Posterior cingulate gyrus (tissue), 11 donors: ENCODE measurements at regions of chr2 and their contacts with region 1.

Region 1: DNA sequence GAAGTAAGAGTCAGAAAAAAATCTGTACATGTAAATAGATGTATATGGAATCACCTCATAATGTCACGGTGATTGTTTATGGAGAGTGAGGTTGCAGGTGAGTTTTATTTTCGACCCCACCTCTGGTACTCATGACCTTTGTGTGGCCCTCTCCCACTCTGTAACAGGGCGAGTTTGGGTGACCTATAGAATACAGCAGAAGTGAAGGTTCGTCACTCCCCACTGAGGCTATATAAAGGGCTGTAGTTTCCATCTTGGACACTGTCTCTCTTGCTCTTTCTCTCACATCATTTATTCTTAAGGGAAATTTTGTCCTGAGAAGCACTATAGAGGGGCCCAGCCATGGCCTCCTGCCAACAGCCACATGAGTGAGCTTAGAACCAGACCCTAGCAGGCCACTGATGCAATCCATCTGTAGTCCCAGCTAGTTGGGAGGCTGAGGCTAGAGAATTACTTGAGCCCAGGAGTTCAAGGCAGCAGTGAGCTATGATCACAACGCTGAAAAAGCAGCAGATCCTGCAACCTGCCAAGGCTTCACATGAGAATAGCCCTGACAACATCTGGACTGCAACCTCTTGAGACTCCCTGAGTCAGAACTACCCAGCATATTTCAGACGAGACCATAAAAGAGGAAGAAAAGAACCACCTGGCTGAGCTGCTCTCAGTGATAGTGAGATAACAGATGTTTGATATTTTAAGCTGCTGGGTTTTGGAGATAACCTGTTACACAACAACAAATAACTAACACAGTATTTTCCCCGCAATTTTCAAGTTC is 74.3 kb upstream of the SLC1A4 start:
- DNase-seq: no peak

Region 2: GRCh38 chr2:65031341-65032018 is 116.6 kb after region 1 on chr2:
- intact Hi-C with region 1: loop called (anchors 2 kb)
- DNase-seq: no peak

Region 3: GRCh38 chr2:65040400-65041261 is 125.7 kb after region 1 on chr2:
- intact Hi-C with region 1: loop called (anchors 2 kb)
- DNase-seq: peak; percentile 74 to 97 (median 86)

Region 4: DNA sequence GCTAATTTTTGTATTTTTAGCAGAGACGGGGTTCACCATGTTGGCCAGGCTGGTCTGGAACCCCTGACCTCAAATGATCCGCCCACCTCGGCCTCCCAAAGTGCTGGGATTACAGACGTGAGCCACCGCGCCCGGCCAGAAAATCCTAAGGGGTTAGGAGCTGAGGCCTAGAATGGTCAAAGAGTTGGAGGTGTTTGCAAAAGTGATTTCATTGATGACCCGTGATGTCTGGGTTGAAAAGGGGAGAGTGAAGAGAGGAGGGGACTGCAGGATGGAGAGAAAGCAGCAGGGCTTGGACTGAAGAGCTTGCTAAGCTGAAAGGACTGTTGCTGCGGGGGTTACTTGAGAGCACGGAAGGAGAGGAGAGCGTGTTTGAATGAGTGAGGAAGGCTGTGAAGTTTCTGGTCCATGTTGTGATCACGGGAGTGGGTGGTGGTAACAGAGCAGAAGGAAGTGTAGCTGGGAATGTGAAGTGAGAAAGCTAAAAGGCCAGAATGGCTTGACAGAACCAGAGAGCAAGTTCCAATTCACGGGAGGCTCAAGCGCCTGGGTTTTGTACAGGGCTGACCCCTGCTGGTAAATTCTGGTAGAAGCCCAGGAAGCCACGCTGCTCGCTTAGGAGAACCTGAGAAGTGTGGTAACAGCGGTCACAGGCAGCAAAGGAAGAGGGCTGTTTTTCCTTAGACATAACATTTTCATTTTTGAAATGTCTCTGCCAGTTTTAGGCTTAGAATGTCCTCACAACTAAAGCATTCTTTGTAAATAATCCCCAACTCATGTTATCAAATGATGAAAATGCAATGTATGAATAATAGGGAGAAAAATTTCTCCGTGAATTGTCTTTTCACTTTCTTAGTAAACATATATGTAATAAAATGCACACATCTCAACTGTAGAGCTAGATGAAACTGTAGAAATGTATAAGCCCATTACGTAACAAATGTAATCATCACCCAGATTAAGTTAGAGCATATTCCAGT is 272.2 kb after region 1 on chr2:
- intact Hi-C with region 1: loop called (anchors 5 kb)
- DNase-seq: peak; percentile 62 to 96 (median 78)

Region 5: DNA sequence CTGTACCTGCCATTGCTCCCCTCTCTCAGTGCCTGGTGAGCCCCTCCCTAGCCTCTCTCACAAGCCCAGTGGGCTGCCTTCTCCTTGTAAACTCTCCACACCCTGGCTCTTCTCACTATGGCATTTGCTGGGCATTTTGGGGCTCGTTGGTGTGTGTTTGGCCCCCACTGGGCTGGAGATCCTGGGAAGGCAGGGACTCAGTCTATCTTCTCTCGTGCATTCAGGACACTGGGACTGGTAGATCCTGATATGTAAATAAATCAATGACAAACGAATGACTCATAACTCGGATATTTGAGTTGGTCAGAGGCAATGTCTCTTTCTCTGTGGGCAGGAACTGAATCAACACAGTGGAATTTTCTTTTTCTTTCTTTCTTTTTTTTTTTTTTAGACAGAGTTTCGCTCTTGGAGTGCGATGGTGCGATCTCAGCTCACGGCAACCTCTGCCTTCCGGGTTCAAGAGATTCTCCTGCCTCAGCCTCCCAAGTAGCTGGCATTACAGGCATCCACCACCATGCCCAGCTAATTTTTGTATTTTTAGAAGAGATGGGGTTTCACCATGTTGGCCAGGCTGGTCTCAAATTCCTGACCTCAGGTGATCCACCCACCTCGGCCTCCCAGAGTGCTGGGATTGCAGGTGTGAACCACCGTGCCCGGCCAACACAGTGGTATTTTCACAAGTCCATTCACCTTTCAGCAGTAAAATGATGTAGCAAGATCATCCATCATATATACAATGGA is 662.1 kb after region 1 on chr2:
- intact Hi-C with region 1: loop called (anchors 5 kb)
- DNase-seq: no peak